Right cardiac atrium (tissue), 5 donors: ENCODE measurements at regions of chr7 and their contacts with region 1.

Region 1: DNA sequence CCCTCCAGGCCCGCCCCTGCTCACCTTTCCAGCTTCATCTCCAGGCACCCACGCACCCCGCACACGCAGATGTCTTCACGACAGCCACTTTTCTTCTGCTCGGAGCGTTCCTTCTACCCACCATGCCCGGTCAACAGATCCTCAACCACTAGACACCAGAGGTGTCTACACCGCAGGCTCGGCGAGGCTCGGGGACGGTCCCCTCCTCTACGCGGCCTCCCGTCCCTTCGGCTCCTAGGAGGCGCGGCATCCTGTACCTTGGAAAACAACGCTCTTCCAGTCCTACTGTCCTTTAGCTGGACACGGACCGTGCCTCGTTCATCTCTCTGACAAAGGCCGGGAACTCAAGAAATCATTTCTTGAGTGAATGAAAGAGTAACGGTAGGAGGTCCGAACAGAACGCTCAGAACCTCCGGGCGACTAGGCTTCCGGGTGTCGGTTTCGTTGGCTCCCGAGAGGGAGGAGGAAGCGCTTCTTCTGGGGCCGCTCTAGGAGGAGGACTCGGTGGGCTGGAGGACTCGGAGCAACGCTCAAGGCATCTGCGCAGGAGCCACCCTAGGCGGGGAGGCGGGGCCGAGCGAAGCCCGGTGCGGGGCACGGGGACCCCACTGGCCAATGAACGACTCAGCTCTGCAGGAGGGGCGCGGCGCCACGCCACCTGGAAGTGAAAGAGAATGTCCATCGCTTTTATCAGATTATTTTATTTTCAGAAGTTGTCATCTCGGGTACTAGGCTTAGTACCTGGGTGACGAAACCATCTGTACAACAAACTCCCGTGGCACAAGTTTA is 7.2 kb upstream of the FIS1 start:
- DNase-seq: peak; percentile 99 to 100 (median 100)
- ATAC-seq: peak; percentile 100
- H3K4me3 ChIP-seq: peak overlapping the region; percentile 91
- H3K27ac ChIP-seq: peak overlapping the region; percentile 8
- H3K4me1 ChIP-seq: peaks cover 4% of the 10 kb centered on the region
- H3K27me3 ChIP-seq: no peaks in the 10 kb centered on the region

Region 2: DNA sequence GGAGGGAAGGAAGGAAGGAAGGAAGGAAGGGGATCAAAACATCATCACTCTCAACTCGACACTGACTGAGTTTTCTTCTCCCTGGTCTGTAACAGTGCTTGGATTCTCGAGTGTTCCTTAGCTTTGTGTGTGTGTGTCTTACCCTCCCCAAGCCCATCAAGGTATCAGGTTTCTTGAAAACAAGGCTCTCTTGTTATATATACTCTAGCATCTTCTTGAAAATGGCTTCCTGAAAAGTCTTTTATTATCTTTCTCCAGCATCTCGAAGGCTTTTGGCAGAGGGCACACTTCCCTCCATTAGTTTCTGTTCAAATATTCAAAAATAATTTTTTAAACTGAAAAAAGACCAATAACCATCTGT is 111.7 kb before region 1 on chr7:
- intact Hi-C with region 1: no loop called
- DNase-seq: no peak
- ATAC-seq: no peak
- H3K4me3 ChIP-seq: no peak overlapping the region
- H3K27ac ChIP-seq: no peak overlapping the region
- H3K4me1 ChIP-seq: peaks cover 2% of the 10 kb centered on the region
- H3K27me3 ChIP-seq: no peaks in the 10 kb centered on the region

Region 3: DNA sequence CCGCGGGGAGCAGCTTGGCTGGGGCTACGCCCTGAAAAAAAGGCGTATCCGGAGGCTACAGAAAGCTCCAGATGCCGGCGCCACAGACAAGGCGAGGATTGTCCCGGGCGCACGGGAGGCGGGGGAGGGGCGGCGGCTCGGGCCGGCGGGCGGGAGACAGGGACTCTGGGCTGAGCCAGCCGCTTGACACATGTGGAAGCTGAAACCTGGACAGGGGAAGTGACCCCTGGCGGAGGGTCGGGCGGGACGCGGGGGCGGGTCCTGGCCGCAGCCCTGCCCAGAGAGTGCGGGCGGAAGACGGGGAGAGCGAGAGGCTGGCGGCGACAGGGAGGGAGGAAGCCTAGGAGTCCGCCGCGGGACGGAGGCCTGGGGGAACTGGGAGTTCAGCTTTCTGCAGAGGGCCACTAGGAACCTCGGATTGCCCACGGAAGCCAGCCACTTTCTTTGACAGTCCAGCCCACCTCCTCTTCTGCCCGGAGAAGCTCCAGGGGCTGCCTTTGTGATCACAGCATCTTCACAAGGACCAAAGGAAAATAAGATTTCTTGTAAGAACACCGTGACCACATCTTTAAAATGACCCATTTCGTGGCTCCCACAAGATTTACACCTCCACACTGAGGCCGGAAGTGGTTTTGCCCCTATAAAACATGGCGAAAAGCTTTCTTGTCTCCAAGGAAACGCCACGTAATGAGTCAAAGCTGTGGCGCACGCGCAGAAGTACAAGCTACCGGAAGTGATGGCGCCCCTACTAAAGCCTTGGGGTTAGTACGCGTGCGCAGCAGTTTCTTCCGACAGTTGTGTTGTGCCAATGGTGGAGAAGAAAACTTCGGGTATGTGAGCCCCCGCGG is 34.5 kb before region 1 on chr7 and contains the starts of genes PLOD3 and ZNHIT1:
- intact Hi-C with region 1: loop called in 1 of 4 experiments (anchors 5 kb)
- DNase-seq: peak; percentile 97 to 99 (median 98)
- ATAC-seq: peak; percentile 95 to 96
- H3K4me3 ChIP-seq: peak within 1 kb of the TSS; percentile 76
- H3K27ac ChIP-seq: peak within 1 kb of the TSS; percentile 86
- H3K4me1 ChIP-seq: peaks cover 2% of the 10 kb centered on the region
- H3K27me3 ChIP-seq: no peaks in the 10 kb centered on the region
- total RNA-seq, gene PLOD3: 34.8 to 52.8 (median 44.0) TPM
- total RNA-seq, gene ZNHIT1: 51.5 to 62.8 (median 55.5) TPM

Region 4: DNA sequence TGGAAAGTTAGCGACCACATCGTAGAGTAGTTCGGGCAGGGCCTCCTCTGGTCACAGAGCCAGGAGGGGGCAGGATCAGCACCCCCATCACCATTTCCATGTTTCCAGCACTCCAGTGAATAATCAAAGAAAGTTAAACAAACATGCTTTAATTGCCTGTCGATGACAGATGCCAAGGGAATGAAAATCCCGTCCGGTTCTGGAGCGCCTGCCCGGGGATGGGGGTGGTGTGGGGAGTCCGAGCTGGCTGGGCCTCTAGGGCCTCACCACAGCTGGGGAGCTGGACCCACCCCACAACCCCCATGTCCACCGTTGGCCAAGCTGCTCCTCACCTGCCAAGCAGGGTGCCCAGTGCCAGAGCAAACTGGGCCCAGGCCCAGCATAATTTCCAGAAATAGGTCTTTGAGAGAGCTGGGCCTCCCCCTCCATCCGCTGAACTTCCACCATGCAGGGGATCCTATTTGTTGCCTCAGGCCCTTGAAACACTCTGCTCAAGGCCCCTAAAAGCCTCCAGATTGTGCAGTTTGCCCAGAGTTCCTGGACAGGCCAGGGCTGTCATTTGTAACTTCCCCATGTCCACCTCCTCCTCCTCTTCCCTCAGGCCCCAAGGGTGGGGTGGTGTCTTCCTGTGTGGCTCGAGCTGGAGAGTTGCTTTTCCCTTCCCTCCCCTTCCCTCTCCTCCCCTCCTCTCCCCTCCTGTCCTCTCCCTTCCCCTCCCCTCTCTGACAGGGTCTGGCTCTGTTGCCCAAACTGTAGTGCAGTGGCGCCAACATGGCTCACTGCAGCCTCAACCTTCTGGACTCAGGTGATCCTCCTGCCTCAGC is 276.0 kb after region 1 on chr7:
- intact Hi-C with region 1: no loop called
- DNase-seq: peak in 1 of 3 donors; percentile 69
- ATAC-seq: peak; percentile 20 to 54
- H3K4me3 ChIP-seq: no peak overlapping the region
- H3K27ac ChIP-seq: no peak overlapping the region
- H3K4me1 ChIP-seq: no peaks in the 10 kb centered on the region
- H3K27me3 ChIP-seq: no peaks in the 10 kb centered on the region